PC-3 (cell line): ENCODE measurements at regions of chr6 and their contacts with region 1.

Region 1: DNA sequence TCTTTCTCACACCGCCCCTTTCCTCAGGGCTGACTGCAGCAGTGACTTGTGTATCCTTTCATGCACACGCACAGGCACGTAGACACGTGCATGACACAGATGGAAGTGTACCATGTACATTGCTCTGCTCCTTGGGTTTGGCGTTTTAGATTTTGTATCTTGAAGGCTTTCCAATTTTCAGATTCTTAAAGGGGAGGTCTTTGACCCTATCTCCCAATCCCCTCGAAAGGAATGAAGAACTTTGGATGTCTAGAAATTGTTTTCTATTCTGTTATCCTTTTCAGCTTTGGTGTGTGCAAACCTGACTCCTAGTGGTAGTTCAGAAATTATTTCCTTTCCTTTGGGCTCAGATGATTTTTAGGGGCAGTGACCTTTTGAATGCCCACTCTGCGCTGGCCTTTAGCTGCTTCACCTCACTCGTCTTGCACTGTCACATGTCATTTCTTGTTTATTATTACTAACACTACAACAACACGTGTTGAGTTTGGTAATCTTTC is 63.0 kb downstream of the HIVEP1 start:
- DNase-seq: peak; percentile 10
- ATAC-seq: no peak
- H3K4me3 ChIP-seq: no peak overlapping the region
- H3K27ac ChIP-seq: no peak overlapping the region
- H3K4me1 ChIP-seq: peaks cover 27% of the 10 kb centered on the region
- H3K27me3 ChIP-seq: no peaks in the 10 kb centered on the region
- CTCF ChIP-seq: peak; percentile 62

Region 2: DNA sequence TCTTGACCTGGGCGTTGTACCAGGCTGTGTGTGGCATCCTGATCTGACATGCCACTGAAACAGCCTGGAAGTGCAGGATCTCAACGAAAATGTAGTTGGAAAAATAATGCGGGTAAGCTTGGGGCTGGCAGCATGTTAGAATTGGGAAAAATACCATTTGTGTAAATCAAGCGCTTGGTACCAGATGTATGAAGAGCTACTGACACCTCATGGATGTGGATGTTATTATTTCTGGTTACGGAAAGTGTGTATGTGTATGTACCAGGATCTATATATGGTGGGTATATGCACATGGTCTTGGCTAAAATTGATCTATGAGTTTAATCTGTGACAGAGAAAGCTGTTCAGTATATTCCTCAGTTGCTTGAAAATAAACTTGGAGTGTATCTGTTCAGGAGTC is 40.3 kb before region 1 on chr6:
- CTCF ChIA-PET with region 1: no interaction called
- POLR2A ChIA-PET with region 1: no interaction called
- intact Hi-C with region 1: loop called (anchors 5 kb)
- DNase-seq: no peak
- ATAC-seq: peak; percentile 42; the same call in 1 of the 2 replicates
- H3K4me3 ChIP-seq: no peak overlapping the region
- H3K27ac ChIP-seq: no peak overlapping the region
- H3K4me1 ChIP-seq: peaks cover 6% of the 10 kb centered on the region; the same call in 1 of the 2 replicates
- H3K27me3 ChIP-seq: no peaks in the 10 kb centered on the region
- CTCF ChIP-seq: peak; percentile 29; the same call in 1 of the 2 replicates

Region 3: GRCh38 chr6:12189661-12190060 is 114.5 kb after region 1 on chr6:
- CTCF ChIA-PET with region 1: no interaction called
- POLR2A ChIA-PET with region 1: no interaction called
- intact Hi-C with region 1: no loop called
- DNase-seq: no peak
- ATAC-seq: no peak
- H3K4me3 ChIP-seq: no peak overlapping the region
- H3K27ac ChIP-seq: no peak overlapping the region
- H3K4me1 ChIP-seq: no peaks in the 10 kb centered on the region
- H3K27me3 ChIP-seq: no peaks in the 10 kb centered on the region
- CTCF ChIP-seq: no peak